GM12878 (cell line): ENCODE measurements at regions of chr4 and their contacts with region 1.

Region 1: DNA sequence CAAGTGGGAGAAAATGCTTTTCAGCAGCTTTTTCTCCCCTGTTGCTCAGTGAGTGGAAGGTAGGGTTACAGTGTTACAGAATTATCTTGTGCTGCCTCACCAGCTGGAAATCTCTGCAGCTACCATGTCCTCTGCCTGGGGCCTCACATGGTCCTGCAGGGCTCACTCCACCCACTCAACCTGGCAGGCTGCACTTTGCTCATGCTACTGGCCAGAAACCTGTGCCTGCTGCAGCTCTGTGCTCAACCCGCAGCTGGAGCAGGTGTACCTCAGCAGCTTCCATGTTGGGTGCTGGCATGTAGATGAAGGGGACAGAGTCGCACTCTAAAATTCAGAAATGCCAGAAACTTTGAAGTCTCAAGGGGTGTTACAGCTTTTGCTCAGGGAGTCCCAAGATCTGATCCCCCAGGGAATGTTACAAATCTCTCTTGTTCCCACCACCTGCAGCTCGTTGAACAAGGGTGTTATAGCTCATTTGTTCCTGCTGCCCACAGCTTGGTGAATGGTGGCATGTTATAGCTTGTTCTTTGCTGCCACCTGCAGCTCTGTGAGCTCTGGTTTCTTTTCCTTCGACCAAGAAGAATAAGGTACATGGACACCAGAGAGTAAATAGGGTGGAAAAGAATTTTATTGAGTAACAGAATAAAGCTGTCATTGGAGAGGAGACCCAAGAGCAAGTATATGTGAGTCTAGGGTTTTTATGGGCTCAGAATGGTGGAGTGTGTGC is 845.8 kb downstream of the TECRL start:
- DNase-seq: no peak
- ATAC-seq: peak; percentile 90
- H3K4me3 ChIP-seq: no peak overlapping the region
- H3K27ac ChIP-seq: no peak overlapping the region
- H3K4me1 ChIP-seq: no peaks in the 10 kb centered on the region
- H3K27me3 ChIP-seq: no peaks in the 10 kb centered on the region
- CTCF ChIP-seq: peak; percentile 16 to 54 (median 38); a peak in 3 of 6 replicates
- EP300 ChIP-seq: no peak
- POLR2A ChIP-seq: no peak
- RAD21 ChIP-seq: peak; percentile 84

Region 2: GRCh38 chr4:62429297-62429696 is 1134.2 kb before region 1 on chr4:
- CTCF ChIA-PET with region 1: no interaction called
- POLR2A ChIA-PET with region 1: no interaction called
- RAD21 ChIA-PET with region 1: no interaction called
- SMC1A ChIA-PET with region 1: no interaction called
- in situ Hi-C with region 1: no loop called
- intact Hi-C with region 1: no loop called
- DNase-seq: no peak
- ATAC-seq: peak; percentile 73
- H3K4me3 ChIP-seq: no peak overlapping the region
- H3K27ac ChIP-seq: no peak overlapping the region
- H3K4me1 ChIP-seq: no peaks in the 10 kb centered on the region
- H3K27me3 ChIP-seq: no peaks in the 10 kb centered on the region
- CTCF ChIP-seq: no peak
- EP300 ChIP-seq: no peak
- POLR2A ChIP-seq: no peak
- RAD21 ChIP-seq: no peak

Region 3: DNA sequence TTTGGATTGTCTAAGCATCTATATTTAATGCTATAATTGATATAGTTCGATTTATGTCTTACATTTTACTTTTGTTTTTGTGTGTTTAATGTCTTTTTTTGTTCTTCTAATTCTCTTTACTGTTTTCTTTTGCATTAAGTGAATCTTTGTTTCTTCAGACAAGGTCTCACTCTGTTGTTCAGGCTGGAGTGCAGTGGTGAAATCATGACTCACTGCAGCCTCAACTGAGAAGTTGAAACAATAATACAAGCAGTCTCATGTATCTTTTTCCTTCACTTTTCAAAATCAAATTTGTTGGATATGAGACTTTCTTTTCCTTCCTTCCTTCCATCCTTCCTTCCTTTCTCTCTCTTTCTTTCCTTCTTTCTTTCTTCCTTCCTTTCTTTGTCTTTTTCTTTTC is 961.7 kb before region 1 on chr4:
- CTCF ChIA-PET with region 1: interaction called, 5 read pairs
- POLR2A ChIA-PET with region 1: no interaction called
- RAD21 ChIA-PET with region 1: no interaction called
- SMC1A ChIA-PET with region 1: no interaction called
- in situ Hi-C with region 1: no loop called
- intact Hi-C with region 1: loop called (anchors 5 kb)
- DNase-seq: no peak
- ATAC-seq: no peak
- H3K4me3 ChIP-seq: no peak overlapping the region
- H3K27ac ChIP-seq: no peak overlapping the region
- H3K4me1 ChIP-seq: no peaks in the 10 kb centered on the region
- H3K27me3 ChIP-seq: no peaks in the 10 kb centered on the region
- CTCF ChIP-seq: no peak
- EP300 ChIP-seq: no peak
- POLR2A ChIP-seq: no peak
- RAD21 ChIP-seq: no peak

Region 4: DNA sequence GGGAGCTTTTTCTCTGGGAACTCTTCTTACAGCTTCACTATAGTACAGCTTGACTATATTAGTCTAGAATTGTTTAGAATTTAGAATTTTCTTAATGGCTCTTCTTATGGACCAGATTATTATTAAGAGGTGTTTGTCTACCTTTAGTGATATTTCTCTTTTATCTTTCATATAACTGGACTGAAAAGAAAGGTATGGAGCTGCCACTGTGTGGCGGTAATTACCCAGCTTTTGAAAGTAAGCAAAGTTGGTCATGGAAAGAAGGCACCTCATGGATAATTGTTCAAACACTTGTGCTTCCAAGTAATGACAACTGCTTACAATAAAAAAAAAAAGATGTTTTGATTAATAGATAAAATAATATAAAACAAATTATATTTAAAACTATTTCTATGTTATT is 266.7 kb before region 1 on chr4:
- CTCF ChIA-PET with region 1: interaction called, 120 read pairs
- POLR2A ChIA-PET with region 1: no interaction called
- RAD21 ChIA-PET with region 1: interaction called, 74 read pairs
- SMC1A ChIA-PET with region 1: interaction called, 75 read pairs
- in situ Hi-C with region 1: no loop called
- intact Hi-C with region 1: loop called (anchors 2 kb)
- DNase-seq: no peak
- ATAC-seq: peak; percentile 42; the same call in 1 of the 3 replicates
- H3K4me3 ChIP-seq: no peak overlapping the region
- H3K27ac ChIP-seq: no peak overlapping the region
- H3K4me1 ChIP-seq: no peaks in the 10 kb centered on the region
- H3K27me3 ChIP-seq: no peaks in the 10 kb centered on the region
- CTCF ChIP-seq: peak in 1 of 3 experiments; percentile 40; a peak in 2 of 6 replicates
- EP300 ChIP-seq: no peak
- POLR2A ChIP-seq: no peak
- RAD21 ChIP-seq: peak; percentile 69

Region 5: DNA sequence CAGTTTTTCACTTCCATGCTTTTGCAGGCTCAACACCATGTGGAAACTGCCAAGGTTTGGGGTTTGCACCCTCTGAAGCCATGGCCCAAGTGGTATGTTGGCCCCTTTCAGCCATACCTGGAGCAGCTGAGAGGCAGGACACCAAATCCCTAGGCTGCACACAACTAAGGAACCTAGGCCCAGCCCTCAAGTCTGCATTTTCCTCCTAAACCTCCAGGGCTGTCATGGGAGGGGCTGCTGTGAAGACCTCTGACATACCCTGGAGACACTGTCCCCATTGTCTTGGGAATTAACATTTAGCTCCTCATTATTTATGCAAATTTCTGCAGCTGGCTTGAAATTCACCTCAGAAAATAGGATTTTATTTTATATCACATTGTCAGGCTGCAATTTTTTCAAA is 10.3 kb before region 1 on chr4:
- CTCF ChIA-PET with region 1: interaction called, 9 read pairs
- POLR2A ChIA-PET with region 1: no interaction called
- RAD21 ChIA-PET with region 1: interaction called, 12 read pairs
- SMC1A ChIA-PET with region 1: interaction called, 12 read pairs
- in situ Hi-C with region 1: no loop called
- intact Hi-C with region 1: no loop called
- DNase-seq: no peak
- ATAC-seq: no peak
- H3K4me3 ChIP-seq: no peak overlapping the region
- H3K27ac ChIP-seq: no peak overlapping the region
- H3K4me1 ChIP-seq: no peaks in the 10 kb centered on the region
- H3K27me3 ChIP-seq: no peaks in the 10 kb centered on the region
- CTCF ChIP-seq: no peak
- EP300 ChIP-seq: no peak
- POLR2A ChIP-seq: no peak
- RAD21 ChIP-seq: no peak

Region 6: DNA sequence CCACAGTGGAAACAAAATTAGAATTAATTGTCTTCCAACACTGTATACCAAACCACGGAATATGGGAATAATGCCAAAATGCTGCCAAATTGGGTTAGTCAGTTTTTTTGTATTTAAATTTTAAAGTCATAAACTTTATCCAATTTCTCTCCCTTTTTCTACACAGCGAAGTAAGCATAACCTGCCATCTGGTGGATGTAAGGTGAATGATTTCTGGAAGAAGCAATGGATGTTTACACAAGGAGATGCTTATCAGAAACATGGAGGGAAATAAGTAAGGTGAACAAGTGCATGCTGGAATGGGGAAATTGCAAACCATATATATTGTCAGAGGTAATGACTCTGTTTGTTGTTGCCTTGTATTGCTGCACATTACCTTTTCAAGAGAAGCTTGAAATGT is 153.9 kb after region 1 on chr4:
- CTCF ChIA-PET with region 1: interaction called, 8 read pairs
- POLR2A ChIA-PET with region 1: no interaction called
- RAD21 ChIA-PET with region 1: interaction called, 4 read pairs
- SMC1A ChIA-PET with region 1: interaction called, 10 read pairs
- in situ Hi-C with region 1: no loop called
- intact Hi-C with region 1: no loop called
- DNase-seq: peak; percentile 3
- ATAC-seq: peak; percentile 40; the same call in 1 of the 3 replicates
- H3K4me3 ChIP-seq: no peak overlapping the region
- H3K27ac ChIP-seq: no peak overlapping the region
- H3K4me1 ChIP-seq: no peaks in the 10 kb centered on the region
- H3K27me3 ChIP-seq: no peaks in the 10 kb centered on the region
- CTCF ChIP-seq: peak; percentile 25 to 41 (median 26); a peak in 4 of 6 replicates
- EP300 ChIP-seq: no peak
- POLR2A ChIP-seq: no peak
- RAD21 ChIP-seq: peak; percentile 73

Region 7: DNA sequence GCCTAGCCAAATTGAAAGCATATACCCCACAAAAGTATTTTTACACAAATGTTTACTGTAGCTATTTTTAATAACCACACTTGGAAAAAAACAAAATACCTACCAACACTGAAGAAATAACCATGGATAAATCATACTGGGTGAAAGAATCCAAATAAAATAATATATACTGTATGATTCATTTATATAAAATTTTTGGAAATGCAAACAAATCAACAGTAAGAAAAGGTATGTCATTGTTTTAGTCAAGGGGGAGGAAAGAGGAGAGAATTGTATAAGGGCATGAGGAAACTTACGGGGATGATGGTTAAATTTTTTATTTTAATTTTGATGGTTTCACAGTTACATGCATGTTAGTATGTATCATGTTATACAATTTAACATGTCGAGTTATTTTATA is 288.0 kb after region 1 on chr4:
- CTCF ChIA-PET with region 1: no interaction called
- POLR2A ChIA-PET with region 1: no interaction called
- RAD21 ChIA-PET with region 1: no interaction called
- SMC1A ChIA-PET with region 1: no interaction called
- in situ Hi-C with region 1: no loop called
- intact Hi-C with region 1: no loop called
- DNase-seq: no peak
- ATAC-seq: no peak
- H3K4me3 ChIP-seq: no peak overlapping the region
- H3K27ac ChIP-seq: no peak overlapping the region
- H3K4me1 ChIP-seq: no peaks in the 10 kb centered on the region
- H3K27me3 ChIP-seq: no peaks in the 10 kb centered on the region
- CTCF ChIP-seq: no peak
- EP300 ChIP-seq: no peak
- POLR2A ChIP-seq: no peak
- RAD21 ChIP-seq: no peak